ENCODE measurements at regions of chr2 and their contacts with region 1.

Region 1: GRCh38 chr2:37877457-37878315 is 47.4 kb upstream of the RMDN2 start:
- DNase-seq: peak; percentile 37
- ATAC-seq: no peak
- H3K4me3 Mint-ChIP-seq: no peak overlapping the region
- H3K27ac Mint-ChIP-seq: no peak overlapping the region
- H3K4me1 Mint-ChIP-seq: peaks cover 11% of the 10 kb centered on the region
- H3K27me3 Mint-ChIP-seq: peaks cover 18% of the 10 kb centered on the region

Region 2: DNA sequence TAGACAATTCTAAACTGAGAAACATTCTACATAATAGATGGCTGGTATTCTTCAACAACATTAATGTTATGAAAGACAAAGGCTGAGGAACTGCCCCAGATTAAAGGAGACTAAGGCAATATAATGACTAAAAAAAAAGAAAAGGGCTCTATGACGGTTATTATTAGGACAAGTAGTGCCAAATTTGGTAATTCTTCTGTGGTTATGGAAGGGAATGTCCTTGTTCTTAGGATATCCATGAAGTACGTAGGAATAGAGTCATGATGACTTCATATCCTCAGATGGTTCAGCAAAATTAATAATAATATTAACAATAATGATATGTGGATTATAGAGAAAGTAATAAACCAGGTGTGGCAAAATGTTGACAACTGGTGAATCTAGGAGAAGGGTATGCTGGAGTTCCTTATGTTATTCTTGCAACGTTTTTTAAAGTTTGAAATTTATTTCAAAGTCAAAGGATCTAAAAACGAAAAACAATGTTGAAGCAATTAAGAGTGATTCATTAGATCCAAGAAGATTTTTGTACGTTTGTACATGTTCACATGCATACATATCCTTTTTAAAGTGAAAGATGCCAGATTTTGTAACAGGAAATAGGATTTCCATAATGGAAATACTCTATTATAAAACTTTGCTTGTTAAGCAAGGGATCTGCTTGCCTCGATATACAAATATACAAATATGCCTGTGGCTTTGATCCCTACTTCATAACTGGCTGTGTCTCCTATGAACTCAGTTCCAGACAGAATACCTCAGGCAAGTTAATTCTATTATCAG is 883.7 kb before region 1 on chr2:
- CTCF ChIA-PET with region 1: no interaction called
- POLR2A ChIA-PET with region 1: no interaction called
- intact Hi-C with region 1: no loop called
- DNase-seq: no peak
- ATAC-seq: no peak
- H3K4me3 Mint-ChIP-seq: no peak overlapping the region
- H3K27ac Mint-ChIP-seq: no peak overlapping the region
- H3K4me1 Mint-ChIP-seq: no peaks in the 10 kb centered on the region
- H3K27me3 Mint-ChIP-seq: no peaks in the 10 kb centered on the region

Region 3: DNA sequence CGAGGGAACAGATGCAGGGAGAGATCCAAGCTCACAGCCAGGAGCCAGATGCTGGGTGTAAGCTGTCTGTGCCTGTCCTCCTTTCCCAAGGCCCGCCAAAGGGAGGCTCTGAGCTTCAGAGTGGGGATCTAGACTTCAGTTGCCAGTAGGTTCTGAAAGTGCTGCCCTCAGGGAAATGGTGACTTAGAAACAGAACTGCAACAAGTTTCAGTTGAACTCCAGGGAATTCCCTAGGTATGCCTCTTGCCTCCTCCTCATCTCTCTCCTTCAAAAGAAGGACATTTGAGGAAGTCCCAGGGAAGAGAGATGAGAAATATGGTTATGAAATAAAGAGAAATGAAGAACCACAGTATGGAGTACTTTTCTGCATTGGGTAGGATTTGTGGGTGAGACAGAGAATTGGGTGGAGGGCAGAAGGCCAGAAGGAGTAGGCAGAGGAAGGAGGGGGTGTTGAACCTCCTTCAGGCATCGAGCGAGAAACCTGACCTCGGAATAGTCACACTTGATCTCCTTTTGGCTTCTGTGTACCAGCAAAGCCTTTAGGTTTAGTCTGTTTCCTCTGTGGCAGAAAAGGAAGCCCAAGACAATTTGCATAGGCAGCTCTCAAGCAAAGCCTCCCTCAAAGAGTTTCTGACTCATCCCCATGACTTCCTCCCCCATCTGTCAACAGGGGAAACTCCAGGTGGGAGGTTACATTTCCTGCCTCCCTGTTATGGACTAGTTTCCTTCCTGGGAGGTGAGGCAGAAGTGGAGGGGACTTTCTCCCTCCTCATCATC is 487.5 kb before region 1 on chr2:
- CTCF ChIA-PET with region 1: interaction called, 143 read pairs
- POLR2A ChIA-PET with region 1: no interaction called
- intact Hi-C with region 1: loop called (anchors 1 kb)
- DNase-seq: peak; percentile 77
- ATAC-seq: peak; percentile 95
- H3K4me3 Mint-ChIP-seq: peak overlapping the region; percentile 30
- H3K27ac Mint-ChIP-seq: peak overlapping the region; percentile 75
- H3K4me1 Mint-ChIP-seq: no peaks in the 10 kb centered on the region
- H3K27me3 Mint-ChIP-seq: peaks cover 5% of the 10 kb centered on the region

Region 4: DNA sequence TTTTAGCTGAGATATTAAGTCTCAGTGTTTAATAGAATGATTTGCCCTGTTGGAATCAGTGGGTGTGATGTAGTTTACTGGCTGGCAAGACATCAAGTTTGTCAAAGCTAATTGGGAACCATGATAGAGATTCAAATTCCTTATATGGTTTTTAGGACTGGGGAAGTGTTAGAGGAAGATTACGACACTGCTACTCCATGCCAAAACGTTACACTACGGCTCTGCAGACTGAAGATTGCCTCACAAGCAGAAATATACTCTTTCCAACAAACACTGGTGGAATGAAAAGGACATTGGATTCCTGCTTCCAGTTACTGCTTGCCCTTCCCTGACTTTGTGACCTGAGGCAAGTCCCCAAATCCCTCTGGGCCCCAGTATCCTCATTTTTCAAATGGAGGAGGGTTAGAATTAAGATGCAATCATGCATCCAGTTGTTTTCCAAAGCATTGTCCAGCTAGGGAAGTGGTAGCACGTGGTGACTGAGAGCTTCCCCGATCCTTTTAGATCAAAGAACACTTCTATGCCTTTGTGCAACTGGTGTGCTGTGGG is 353.8 kb before region 1 on chr2:
- CTCF ChIA-PET with region 1: interaction called, 11 read pairs
- POLR2A ChIA-PET with region 1: no interaction called
- intact Hi-C with region 1: no loop called
- DNase-seq: no peak
- ATAC-seq: no peak
- H3K4me3 Mint-ChIP-seq: no peak overlapping the region
- H3K27ac Mint-ChIP-seq: no peak overlapping the region
- H3K4me1 Mint-ChIP-seq: no peaks in the 10 kb centered on the region
- H3K27me3 Mint-ChIP-seq: no peaks in the 10 kb centered on the region

Region 5: GRCh38 chr2:37672104-37672869 is 205.4 kb before region 1 on chr2:
- CTCF ChIA-PET with region 1: interaction called, 6 read pairs
- POLR2A ChIA-PET with region 1: interaction called, 3 read pairs
- intact Hi-C with region 1: loop called (anchors 1 to 5 kb)
- DNase-seq: peak; percentile 80
- ATAC-seq: peak; percentile 34
- H3K4me3 Mint-ChIP-seq: peak overlapping the region; percentile 83
- H3K27ac Mint-ChIP-seq: peak overlapping the region; percentile 83
- H3K4me1 Mint-ChIP-seq: peaks cover 40% of the 10 kb centered on the region
- H3K27me3 Mint-ChIP-seq: no peaks in the 10 kb centered on the region

Region 6: DNA sequence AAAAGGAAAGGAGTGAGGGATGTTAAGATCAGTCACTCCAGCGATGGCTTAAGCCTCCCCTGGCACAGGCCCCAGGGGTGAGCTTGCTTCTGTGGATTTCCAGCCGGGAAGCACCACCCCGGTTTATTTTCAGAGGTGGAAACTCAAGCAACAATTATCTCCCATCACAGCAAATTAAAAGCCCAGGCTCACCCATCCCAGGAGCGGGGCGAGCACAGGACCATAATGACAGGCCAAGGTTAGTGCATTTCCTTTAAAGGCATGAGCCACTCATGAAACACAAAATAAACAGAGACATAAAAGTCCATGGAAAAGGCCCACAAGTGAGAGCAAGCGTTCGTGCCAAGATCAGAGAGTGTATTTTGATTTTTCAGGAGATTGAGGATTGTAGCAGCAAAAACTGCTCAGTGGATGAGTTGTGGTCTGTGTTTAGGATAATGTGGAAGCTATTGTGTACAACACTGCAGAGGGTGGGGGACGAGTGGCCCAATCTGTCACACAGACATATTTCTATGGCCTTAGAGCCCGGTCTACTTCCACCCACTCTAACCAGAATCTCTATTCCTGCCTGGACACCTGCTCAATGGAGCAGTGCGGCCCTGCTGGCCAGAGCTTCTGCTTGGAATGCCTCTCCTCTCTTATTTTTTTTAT is 94.8 kb before region 1 on chr2:
- CTCF ChIA-PET with region 1: no interaction called
- POLR2A ChIA-PET with region 1: no interaction called
- intact Hi-C with region 1: no loop called
- DNase-seq: no peak
- ATAC-seq: no peak
- H3K4me3 Mint-ChIP-seq: no peak overlapping the region
- H3K27ac Mint-ChIP-seq: peak overlapping the region; percentile 2
- H3K4me1 Mint-ChIP-seq: no peaks in the 10 kb centered on the region
- H3K27me3 Mint-ChIP-seq: no peaks in the 10 kb centered on the region

Region 7: GRCh38 chr2:37851828-37852584 is 25.7 kb before region 1 on chr2:
- CTCF ChIA-PET with region 1: interaction called, 16 read pairs
- POLR2A ChIA-PET with region 1: no interaction called
- intact Hi-C with region 1: loop called in 1 of 2 experiments (anchors 1 kb)
- DNase-seq: no peak
- ATAC-seq: peak; percentile 93
- H3K4me3 Mint-ChIP-seq: no peak overlapping the region
- H3K27ac Mint-ChIP-seq: peak overlapping the region; percentile 84
- H3K4me1 Mint-ChIP-seq: peaks cover 23% of the 10 kb centered on the region
- H3K27me3 Mint-ChIP-seq: no peaks in the 10 kb centered on the region

Region 8: GRCh38 chr2:38057651-38058410 is 180.1 kb after region 1 on chr2:
- CTCF ChIA-PET with region 1: no interaction called
- POLR2A ChIA-PET with region 1: no interaction called
- intact Hi-C with region 1: no loop called
- DNase-seq: peak; percentile 24
- ATAC-seq: peak; percentile 44
- H3K4me3 Mint-ChIP-seq: no peak overlapping the region
- H3K27ac Mint-ChIP-seq: no peak overlapping the region
- H3K4me1 Mint-ChIP-seq: peaks cover 21% of the 10 kb centered on the region
- H3K27me3 Mint-ChIP-seq: peaks cover 18% of the 10 kb centered on the region